Breast epithelium (tissue), 4 donors: ENCODE measurements at regions of chr6 and their contacts with region 1.

Region 1: DNA sequence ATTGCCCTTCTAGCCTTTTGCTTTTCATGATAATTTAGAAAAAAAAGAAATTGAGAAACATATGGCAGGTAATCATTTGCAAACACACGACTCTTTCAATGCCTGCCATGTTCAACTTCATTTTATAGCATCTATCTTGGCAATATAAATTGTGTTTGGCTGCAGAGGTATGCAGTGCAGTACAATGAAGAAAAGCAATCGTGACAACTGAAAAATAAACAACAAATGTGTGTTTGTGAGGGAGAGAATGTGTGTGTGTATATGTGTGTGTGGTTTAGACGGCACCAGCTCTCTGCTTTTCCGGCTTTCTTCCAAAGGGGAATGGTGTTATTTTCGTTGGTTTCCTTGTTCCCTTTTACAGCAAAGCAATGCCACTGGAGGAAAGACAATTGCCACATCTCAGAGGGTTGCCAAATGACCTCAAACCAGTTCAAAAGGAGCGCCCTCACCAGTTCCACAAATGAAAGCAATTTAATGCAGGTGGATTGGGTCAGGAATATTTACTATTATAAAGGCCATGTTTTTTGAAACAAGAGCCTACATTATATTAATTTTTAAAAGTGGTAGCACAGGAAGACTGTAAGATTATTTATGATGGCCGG is 587.2 kb downstream of the PRKN start:
- DNase-seq: no peak
- H3K4me3 ChIP-seq: no peak overlapping the region
- H3K27ac ChIP-seq: no peak overlapping the region
- H3K4me1 ChIP-seq: no peaks in the 10 kb centered on the region
- H3K27me3 ChIP-seq: no peaks in the 10 kb centered on the region
- CTCF ChIP-seq: no peak
- POLR2A ChIP-seq: no peak

Region 2: DNA sequence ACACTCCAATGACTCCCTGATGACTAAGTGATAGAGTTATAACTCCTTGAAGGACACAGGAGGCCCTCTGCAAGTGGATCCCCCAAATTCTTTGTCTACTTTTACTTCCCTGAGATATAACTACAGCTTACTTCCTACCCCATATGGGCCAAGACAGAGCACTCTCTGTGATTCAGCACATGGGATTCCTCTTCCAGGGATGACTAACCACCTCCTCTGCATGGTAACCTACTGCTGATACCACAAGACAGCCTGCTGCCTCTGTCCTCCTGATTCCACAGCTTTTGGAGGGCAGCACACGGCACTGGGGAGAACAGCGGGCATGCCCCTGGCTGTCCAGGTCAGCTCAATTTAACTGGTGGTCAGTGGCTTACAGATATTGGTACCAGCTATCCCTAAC is 190.8 kb before region 1 on chr6:
- intact Hi-C with region 1: loop called (anchors 5 kb)
- DNase-seq: no peak
- H3K4me3 ChIP-seq: no peak overlapping the region
- H3K27ac ChIP-seq: no peak overlapping the region
- H3K4me1 ChIP-seq: no peaks in the 10 kb centered on the region
- H3K27me3 ChIP-seq: no peaks in the 10 kb centered on the region
- CTCF ChIP-seq: no peak
- POLR2A ChIP-seq: no peak